ENCODE measurements at regions of chr19 and their contacts with region 1.

Region 1: GRCh38 chr19:36214386-36215275 is at the starts of genes ZNF146 and ZNF565:
- DNase-seq: peak; percentile 97
- ATAC-seq: peak; percentile 94
- H3K4me3 ChIP-seq: peak within 1 kb of the TSS; percentile 87 to 99
- H3K27ac ChIP-seq: peak within 1 kb of the TSS; percentile 88
- H3K4me1 ChIP-seq: peaks cover 10 to 16% of the 10 kb centered on the region in 2 experiments
- H3K27me3 ChIP-seq: no peaks in the 10 kb centered on the region
- CTCF ChIP-seq: no peak
- POLR2A ChIP-seq: peak; percentile 66
- RAD21 ChIP-seq: no peak
- total RNA-seq, gene ZNF146: 105 TPM
- total RNA-seq, gene ZNF565: 3.2 TPM

Region 2: DNA sequence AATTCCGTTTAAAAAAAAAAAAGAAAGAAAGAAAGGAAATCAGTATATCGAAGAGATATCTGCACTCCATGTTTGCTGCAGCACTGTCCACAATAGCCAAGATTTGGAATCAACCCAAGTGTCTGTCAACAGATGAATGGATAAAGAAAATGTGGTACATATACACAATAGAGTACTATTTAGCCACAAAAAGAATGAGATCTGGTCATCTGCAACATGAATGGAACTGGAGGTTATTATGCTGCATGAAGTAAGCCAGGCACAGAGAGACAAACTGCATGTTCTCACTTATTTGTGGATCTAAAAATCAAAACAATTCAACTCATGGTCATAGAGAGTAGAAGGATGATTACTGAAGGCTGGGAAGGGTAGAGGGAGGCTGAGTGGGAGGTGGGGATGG is 16.5 kb before region 1 on chr19:
- CTCF ChIA-PET with region 1: no interaction called
- POLR2A ChIA-PET with region 1: no interaction called
- RAD21 ChIA-PET with region 1: no interaction called
- intact Hi-C with region 1: no loop called
- DNase-seq: no peak
- ATAC-seq: no peak
- H3K4me3 ChIP-seq: no peak overlapping the region
- H3K27ac ChIP-seq: no peak overlapping the region
- H3K4me1 ChIP-seq: peaks cover 0 to 10% of the 10 kb centered on the region in 2 experiments; a peak in 2 of 4 replicates
- H3K27me3 ChIP-seq: no peaks in the 10 kb centered on the region
- CTCF ChIP-seq: no peak
- POLR2A ChIP-seq: no peak
- RAD21 ChIP-seq: no peak

Region 3: GRCh38 chr19:36244066-36244465 is 29.4 kb after region 1 on chr19:
- CTCF ChIA-PET with region 1: no interaction called
- POLR2A ChIA-PET with region 1: no interaction called
- RAD21 ChIA-PET with region 1: no interaction called
- intact Hi-C with region 1: no loop called
- DNase-seq: no peak
- ATAC-seq: no peak
- H3K4me3 ChIP-seq: no peak overlapping the region
- H3K27ac ChIP-seq: no peak overlapping the region
- H3K4me1 ChIP-seq: no peaks in the 10 kb centered on the region
- H3K27me3 ChIP-seq: no peaks in the 10 kb centered on the region
- CTCF ChIP-seq: no peak
- POLR2A ChIP-seq: no peak
- RAD21 ChIP-seq: no peak

Region 4: DNA sequence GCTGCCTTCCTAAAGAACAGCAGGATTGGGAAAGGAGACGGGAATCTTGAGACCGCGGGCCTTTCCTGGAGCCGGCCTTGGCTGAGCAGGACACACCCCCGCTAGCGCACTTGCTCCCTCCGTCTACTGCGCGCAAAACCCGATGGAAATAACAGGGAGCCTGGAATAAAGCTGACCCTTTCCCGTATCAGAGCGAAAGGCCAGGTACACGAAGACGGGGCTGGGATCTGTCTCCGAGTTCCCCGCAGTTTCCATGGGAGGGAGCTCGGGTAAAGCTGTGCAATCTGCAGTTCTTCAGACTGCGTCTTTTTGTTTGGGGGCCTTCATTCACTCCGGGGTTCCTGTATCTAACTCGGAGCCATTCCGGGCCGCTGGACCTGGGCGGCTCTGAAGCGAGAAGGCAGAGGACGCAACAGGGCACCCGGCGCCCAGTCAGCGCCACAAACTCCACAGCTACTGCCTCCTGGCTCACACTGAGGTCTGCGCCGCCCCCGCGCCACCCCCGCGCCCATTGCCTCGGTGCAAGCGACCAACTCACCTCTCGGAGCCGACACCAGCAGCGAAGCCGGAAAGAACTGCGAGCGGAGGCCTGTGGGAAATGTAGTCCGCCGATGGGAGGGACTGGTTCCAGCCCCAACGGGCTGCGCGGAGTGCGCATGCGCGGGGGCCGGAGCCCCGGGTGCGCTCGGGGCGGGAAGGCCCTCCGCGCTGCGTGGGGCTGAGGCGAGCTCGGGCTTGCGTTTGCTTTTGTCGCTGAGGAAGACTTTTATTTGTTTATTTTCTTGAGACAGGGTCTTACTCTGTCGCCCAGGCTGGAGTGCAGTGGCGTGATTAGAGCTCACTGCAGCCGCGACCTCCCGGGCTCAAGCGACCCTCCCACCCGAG is 164.2 kb after region 1 on chr19 and contains the start of gene ZFP14:
- CTCF ChIA-PET with region 1: no interaction called
- POLR2A ChIA-PET with region 1: no interaction called
- RAD21 ChIA-PET with region 1: no interaction called
- intact Hi-C with region 1: loop called (anchors 10 kb)
- DNase-seq: peak; percentile 87
- ATAC-seq: peak; percentile 97
- H3K4me3 ChIP-seq: peak within 1 kb of the TSS; percentile 72 to 79
- H3K27ac ChIP-seq: peak within 1 kb of the TSS; percentile 50
- H3K4me1 ChIP-seq: peaks cover 3 to 11% of the 10 kb centered on the region in 2 experiments; a peak in 3 of 4 replicates
- H3K27me3 ChIP-seq: no peaks in the 10 kb centered on the region
- CTCF ChIP-seq: peak in 1 of 3 experiments; percentile 30; a peak in 3 of 6 replicates
- POLR2A ChIP-seq: peak; percentile 55
- RAD21 ChIP-seq: peak; percentile 57
- total RNA-seq, gene ZFP14: 2.8 TPM

Region 5: DNA sequence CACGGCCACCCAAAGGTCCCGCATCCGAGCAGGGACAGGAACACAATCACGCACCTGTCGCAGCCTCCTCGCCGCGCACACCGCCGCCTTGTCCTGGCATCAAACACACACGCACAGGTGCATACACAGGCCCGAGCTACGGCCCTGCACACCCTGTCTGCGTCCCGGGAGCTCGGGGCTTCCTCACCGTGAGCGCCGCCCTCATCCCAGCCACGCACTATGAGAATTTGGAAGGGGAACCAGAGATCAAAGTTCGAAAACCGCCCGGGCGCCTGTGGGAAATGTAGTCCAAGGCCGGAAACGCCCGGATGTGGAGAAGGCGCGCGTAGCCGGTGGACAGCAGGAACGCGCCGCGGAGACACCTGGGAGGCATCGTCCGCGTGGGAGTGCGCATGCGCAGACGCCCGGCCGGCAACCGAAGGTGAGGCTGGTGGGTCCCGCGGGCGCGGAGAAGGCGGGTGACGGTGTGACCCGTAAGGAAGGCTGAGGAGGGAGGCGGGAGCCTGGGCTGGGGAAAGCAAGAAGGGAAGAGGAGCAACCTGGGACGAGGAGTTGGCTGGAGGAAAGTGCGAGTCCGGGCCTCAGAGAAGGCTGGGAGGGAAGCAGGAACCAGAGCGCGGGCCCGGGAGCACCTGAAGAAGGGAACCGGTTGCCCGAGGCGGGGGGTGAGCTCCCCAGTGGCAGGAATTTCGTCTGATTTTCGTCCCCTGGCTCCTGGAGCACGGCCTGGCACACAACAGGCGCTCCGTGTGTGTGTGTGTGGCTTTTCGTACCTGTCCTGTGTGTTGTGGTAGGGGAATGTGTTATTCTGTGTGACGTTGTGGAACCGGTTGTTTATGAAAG is 472.8 kb after region 1 on chr19 and contains the start of gene ZNF567:
- CTCF ChIA-PET with region 1: no interaction called
- POLR2A ChIA-PET with region 1: no interaction called
- RAD21 ChIA-PET with region 1: no interaction called
- intact Hi-C with region 1: loop called (anchors 10 kb)
- DNase-seq: peak; percentile 93
- ATAC-seq: peak; percentile 96
- H3K4me3 ChIP-seq: peak within 1 kb of the TSS; percentile 88 to 90
- H3K27ac ChIP-seq: peak within 1 kb of the TSS; percentile 59
- H3K4me1 ChIP-seq: peaks cover 0 to 13% of the 10 kb centered on the region in 2 experiments; a peak in 1 of 4 replicates
- H3K27me3 ChIP-seq: no peaks in the 10 kb centered on the region
- CTCF ChIP-seq: 0 out of 6 replicates have a peak, but pooled peaks of 1 of the 3 experiments have one; percentile 1
- POLR2A ChIP-seq: no peak
- RAD21 ChIP-seq: no peak
- total RNA-seq, gene ZNF567: 5.6 TPM